Psoas muscle (tissue), 8 donors: ENCODE measurements at regions of chr16 and their contacts with region 1.

Region 1: DNA sequence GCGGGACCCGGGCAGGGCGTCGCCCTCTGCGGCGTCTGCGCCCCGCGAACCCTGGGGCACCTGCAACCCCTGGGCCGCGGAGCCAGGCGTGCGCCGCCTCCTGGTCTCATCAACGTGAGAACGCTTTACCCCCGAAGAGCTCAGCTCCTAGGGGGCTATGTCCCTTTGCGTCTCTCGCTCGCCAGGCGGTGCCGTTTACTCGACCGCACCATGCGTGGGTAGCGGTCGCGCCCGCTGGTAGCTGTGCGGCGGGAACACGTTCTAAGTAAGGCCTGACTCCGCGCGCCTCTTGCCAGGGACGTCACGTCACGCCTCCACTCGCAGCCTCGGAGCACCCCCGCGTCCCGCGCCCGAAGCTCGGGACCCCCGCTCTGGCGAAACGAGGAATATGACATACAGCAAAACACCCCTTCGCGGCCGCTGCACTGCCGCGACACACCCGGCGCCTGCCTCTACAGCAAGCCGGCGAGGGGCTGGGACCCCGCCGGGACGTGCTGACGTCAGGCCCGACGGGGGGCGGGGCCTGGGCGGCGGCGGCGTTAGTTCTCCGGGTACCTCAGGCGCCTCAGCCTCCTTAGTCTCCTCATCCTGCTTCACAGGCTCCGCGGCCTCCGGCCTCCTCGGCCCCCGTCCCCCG is at the start of gene RAB11FIP3:
- DNase-seq: peak; percentile 86 to 90
- ATAC-seq: peak; percentile 69 to 74 (median 72)
- H3K4me3 ChIP-seq: peak within 1 kb of the TSS; percentile 89
- H3K27ac ChIP-seq: peak within 1 kb of the TSS; percentile 96
- H3K4me1 ChIP-seq: peaks cover 46% of the 10 kb centered on the region
- H3K27me3 ChIP-seq: no peaks in the 10 kb centered on the region
- CTCF ChIP-seq: peak; percentile 26
- total RNA-seq, gene RAB11FIP3: 44.7 to 89.5 (median 71.5) TPM

Region 2: DNA sequence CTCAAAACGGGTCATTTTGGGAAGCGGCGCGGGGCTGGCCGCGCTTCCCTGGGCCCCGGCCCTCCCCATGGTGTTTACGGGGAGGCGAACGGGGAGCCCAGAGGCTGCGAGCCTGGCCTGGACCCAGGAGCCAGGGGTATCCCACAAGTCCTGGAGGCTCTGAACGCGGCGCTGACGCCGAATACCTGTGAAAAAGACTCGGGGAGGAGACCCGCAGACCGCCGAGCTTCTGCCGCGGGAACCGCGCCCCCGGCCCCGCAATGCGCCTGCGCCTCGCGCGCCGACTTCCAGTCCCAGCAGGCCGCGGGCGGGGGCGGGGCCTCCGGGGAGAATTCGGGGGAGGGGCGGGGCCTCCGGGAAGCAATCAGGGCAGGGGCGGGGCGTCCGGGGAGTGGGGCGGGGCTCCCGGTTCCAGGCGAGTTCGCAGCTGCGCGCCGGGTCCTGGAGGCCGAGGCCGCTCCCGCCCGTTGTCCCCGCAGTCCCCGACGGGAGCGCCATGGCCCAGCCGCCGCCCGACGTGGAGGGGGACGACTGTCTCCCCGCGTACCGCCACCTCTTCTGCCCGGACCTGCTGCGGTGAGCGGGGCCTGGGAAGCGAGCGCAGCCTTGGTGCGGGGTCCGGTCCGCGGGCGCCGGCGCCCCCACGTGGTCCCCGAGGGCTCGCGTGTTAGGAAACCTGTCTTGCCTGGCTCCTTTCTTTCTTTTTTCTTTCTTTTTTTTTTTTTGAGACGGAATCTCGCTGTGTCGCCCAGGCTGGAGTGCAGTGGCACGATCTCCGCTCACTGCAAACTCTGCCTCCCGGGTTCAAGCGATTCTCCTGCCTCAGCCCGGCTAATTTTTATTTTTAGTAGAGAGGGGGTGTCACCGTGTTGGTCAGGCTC is 23.5 kb before region 1 on chr16 and contains the start of gene DECR2:
- intact Hi-C with region 1: loop called in 1 of 2 experiments (anchors 2 kb)
- DNase-seq: peak; percentile 98
- ATAC-seq: peak; percentile 89 to 94 (median 92)
- H3K4me3 ChIP-seq: peak within 1 kb of the TSS; percentile 76
- H3K27ac ChIP-seq: peak within 1 kb of the TSS; percentile 95
- H3K4me1 ChIP-seq: peaks cover 21% of the 10 kb centered on the region
- H3K27me3 ChIP-seq: no peaks in the 10 kb centered on the region
- CTCF ChIP-seq: peak; percentile 38
- total RNA-seq, gene DECR2: 13.9 to 22.9 (median 19.6) TPM

Region 3: DNA sequence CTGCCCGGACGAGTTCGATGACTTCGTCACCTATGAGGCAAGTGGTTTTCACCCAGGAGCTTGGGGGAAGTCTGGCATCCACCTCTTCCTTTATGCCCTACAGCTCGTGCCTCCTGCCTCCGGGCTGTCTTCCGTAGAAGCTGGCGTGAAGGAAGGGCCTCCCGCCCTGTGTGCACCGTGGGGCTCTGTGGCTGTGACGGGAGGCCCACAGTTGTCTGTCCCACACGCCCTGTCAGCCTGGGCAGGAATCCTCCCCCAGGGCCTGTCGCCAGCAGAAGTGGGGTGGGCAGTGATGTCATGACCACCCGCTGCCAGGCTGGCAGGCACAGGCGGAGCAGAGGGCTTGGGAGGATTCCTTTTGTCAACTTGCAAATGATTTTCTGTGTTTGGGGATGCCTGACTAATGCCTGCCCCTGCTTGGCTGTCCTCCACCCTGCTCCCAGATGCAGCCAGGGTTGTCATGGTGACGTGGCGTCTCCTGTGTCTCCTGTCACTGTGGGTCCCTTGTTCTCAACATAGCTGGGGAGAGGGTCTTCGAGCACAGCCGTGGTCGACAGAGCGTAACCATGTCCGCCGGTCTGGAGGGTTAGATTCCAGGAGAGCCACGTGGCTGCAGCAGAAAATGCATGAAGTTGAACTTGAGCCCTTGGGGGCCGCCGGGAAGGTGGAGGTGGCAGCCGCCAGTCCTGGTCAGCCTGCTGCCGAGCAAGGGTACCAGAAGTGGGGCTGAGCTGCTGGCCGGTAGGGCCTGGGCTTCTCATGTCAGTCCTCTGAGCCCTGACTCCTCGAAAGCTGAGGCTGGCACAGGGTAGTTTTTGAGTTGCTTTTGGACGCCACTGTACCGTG is 46.4 kb after region 1 on chr16:
- intact Hi-C with region 1: loop called in 1 of 2 experiments (anchors 5 kb)
- DNase-seq: peak in 1 of 2 donors; percentile 71
- ATAC-seq: peak; percentile 49 to 68 (median 58)
- H3K4me3 ChIP-seq: no peak overlapping the region
- H3K27ac ChIP-seq: no peak overlapping the region
- H3K4me1 ChIP-seq: peaks cover 17% of the 10 kb centered on the region
- H3K27me3 ChIP-seq: no peaks in the 10 kb centered on the region
- CTCF ChIP-seq: no peak

Region 4: DNA sequence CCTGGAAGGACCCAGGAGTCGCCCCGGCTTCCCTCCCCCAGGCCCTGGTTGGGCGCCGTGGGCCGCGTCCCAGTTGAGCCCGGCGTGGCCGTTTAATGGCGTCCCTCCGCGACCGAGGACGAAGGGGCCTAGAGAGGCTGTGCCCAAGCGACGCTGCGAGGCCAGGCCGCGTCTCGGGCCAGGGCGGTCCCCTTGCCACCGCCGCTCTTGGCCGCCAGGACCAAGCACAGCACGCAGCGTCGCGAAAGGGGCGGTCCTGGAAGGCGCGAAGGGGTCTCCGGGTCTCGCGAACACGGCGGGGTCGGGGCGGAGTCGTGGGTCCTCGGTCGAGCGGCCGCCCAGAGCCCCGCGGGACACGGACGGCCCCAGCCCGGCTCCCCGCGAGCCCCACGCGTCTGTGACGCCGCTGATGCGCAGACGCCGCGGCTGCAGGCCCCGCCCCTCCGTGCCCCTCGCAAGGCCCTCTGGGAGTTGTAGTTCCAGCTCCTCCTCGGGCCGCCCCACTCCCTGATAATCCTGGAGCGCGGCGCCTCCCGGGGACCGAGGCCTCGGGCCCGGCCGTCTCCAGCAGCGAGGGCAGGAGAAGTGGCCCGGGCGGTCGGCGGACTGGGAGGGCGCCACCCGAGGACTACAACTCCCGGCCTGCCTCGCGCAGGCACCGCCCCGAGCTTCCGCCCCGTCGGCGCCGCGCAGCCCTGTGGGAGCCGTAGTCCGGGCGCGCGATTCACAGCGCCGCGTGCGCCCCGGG is 102.0 kb after region 1 on chr16 and contains the start of gene CAPN15:
- intact Hi-C with region 1: loop called in 1 of 2 experiments (anchors 5 kb)
- DNase-seq: peak; percentile 89 to 95
- ATAC-seq: peak; percentile 80 to 84 (median 81)
- H3K4me3 ChIP-seq: peak within 1 kb of the TSS; percentile 87
- H3K27ac ChIP-seq: peak within 1 kb of the TSS; percentile 100
- H3K4me1 ChIP-seq: peaks cover 42% of the 10 kb centered on the region
- H3K27me3 ChIP-seq: no peaks in the 10 kb centered on the region
- CTCF ChIP-seq: no peak
- total RNA-seq, gene CAPN15: 15.5 to 32.1 (median 26.8) TPM